ENCODE measurements at regions of chr13 and their contacts with region 1.

Region 1: DNA sequence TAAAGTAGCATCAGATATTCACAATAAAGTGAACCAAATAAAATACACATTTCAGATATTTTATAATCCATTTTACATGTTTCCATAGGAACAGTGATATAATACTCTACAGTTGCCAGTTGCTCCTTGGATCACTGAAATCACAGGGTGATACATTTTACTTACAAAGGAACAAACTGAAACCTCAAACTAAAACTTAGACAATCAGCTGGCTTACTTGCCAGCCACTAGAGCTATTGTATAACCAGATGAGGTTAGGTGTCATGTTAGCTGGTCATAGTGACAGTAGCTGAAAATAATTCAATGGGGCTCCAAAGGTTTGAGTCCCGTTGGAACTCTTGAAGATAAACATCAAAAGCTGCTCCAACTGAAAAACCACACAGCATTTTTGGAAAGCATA is 274.6 kb downstream of the ITGBL1 start:
- DNase-seq: no peak
- ATAC-seq: no peak

Region 2: DNA sequence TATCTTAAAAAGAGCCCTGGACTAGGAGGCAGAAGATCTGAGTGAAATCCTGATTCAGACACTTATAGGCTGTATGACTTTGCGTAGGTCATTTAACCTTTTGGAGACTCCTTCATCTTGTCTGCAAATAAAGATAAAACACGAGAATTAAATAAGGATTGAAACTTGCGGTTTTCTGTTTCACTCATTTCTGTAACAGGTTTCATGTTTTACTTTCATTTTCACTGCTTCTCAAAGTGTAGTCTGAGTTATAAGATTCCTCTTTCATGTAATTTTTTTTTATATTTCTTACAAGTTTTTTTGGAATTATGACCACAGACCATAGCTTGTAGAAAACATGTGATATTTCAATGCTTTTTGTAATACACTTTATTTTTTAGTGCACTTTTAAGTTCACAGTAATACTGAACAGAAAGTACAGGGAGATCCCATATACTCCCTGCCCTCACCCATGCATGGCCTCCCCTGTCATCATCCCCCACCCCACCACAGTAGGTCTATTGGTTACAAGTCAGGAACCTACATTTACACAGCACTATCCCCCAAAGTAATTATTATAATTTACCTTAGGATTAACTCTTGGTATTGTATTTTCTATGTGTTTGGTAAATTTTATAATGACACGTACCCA is 100.1 kb before region 1 on chr13:
- intact Hi-C with region 1: loop called in 1 of 2 experiments (anchors 5 kb)
- DNase-seq: no peak
- ATAC-seq: peak in 1 of 2 donors; percentile 57

Region 3: GRCh38 chr13:101661839-101662238 is 65.3 kb before region 1 on chr13:
- intact Hi-C with region 1: no loop called
- DNase-seq: no peak
- ATAC-seq: no peak

Measured in left cardiac atrium (tissue), 4 donors.